ENCODE measurements at regions of chr19 and their contacts with region 1.

Region 1: DNA sequence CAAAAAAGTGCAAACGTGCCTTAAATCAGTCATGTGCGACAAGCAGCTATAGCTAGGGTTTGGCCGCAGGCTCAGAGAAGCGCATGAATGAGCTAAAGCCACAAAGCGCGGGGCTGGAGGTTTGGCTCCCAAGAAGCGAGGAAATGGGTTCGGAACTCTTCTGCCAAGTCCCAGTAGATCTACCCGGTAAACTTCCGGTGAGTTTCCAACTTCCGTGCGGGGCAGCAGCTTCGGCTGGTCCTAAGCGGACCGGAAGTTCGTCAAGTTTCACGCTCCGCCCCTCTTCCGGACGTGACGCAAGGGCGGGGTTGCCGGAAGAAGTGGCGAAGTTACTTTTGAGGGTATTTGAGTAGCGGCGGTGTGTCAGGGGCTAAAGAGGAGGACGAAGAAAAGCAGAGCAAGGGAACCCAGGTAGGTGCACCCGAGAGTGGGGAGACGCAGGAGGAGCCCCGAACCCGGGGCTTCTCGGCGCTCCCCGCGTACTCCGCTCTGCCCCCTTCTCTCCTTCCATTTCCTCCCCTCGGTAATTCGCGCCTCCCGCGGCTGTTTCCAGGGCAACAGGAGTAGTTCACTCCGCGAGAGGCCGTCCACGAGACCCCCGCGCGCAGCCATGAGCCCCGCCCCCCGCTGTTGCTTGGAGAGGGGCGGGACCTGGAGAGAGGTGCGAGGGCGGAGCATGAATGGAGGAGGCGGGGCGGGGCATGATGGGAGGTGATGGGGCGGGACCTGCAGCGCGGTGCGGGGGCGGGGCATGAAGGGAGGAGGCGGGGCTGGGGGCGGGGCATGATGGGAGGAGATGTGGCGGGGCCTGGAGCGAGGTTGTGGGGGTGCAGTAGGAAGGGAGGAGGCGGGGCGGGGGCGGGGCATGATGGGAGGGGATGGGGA is at the start of gene NR1H2:
- DNase-seq: peak; percentile 94 to 97 (median 96)
- H3K4me3 ChIP-seq: peak within 1 kb of the TSS; percentile 79
- H3K27ac ChIP-seq: peak within 1 kb of the TSS; percentile 92 to 98
- H3K4me1 ChIP-seq: no peaks in the 10 kb centered on the region
- H3K27me3 ChIP-seq: no peaks in the 10 kb centered on the region
- CTCF ChIP-seq: no peak
- EP300 ChIP-seq: peak; percentile 51
- POLR2A ChIP-seq: peak; percentile 93
- total RNA-seq, gene NR1H2: 58.6 to 84.2 (median 62.3) TPM

Region 2: GRCh38 chr19:49309087-49309486 is 1067.3 kb before region 1 on chr19:
- intact Hi-C with region 1: no loop called
- DNase-seq: no peak
- H3K4me3 ChIP-seq: no peak overlapping the region
- H3K27ac ChIP-seq: no peak overlapping the region
- H3K4me1 ChIP-seq: no peaks in the 10 kb centered on the region
- H3K27me3 ChIP-seq: no peaks in the 10 kb centered on the region
- CTCF ChIP-seq: no peak
- EP300 ChIP-seq: no peak
- POLR2A ChIP-seq: no peak

Region 3: DNA sequence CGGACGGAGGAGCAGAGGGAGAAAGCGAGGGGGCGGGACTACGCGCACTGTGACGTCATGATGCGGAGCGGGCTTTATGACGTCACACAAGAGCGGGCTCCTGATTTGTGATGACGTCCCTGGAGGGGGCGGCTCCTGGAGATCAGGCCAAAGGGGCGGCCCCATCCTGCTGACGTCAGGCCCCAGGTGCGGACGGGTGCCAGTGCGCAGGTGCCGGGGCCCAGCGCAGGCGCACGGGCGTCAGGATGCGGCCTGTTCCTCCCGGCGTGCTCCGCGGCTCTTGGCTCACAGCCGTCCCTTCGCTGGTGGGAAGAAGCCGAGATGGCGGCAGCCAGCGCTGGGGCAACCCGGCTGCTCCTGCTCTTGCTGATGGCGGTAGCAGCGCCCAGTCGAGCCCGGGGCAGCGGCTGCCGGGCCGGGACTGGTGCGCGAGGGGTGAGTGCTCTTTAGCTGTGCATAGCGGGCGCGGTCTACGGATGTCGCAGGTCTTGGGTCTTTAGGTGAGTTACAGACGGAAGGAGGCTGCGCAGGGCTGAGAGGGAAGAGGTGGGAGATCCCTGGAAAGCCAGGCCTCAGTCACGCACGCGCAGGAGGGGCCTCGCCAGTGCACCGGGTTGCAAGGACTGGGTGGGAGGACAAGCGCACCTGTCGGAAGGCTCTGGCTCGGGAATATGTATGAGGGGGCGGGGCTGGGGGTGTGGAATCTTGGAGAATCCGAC is 100.0 kb after region 1 on chr19 and contains the starts of genes EMC10 and GARIN5A:
- intact Hi-C with region 1: loop called in 1 of 4 experiments (anchors 5 kb)
- DNase-seq: peak; percentile 92 to 97 (median 94)
- H3K4me3 ChIP-seq: peak within 1 kb of the TSS; percentile 90
- H3K27ac ChIP-seq: peak within 1 kb of the TSS; percentile 61 to 73
- H3K4me1 ChIP-seq: peaks cover 15% of the 10 kb centered on the region
- H3K27me3 ChIP-seq: no peaks in the 10 kb centered on the region
- CTCF ChIP-seq: peak in 1 of 3 donors; percentile 20
- EP300 ChIP-seq: peak; percentile 65
- POLR2A ChIP-seq: peak; percentile 47
- total RNA-seq, gene EMC10: 50.4 to 132 (median 96.7) TPM
- total RNA-seq, gene GARIN5A: 2.1 to 10.3 (median 3.3) TPM

Measured in ovary (tissue), 10 donors.